ENCODE measurements at regions of chr3 and their contacts with region 1.

Region 1: GRCh38 chr3:183635431-183636220 is at the start of gene KLHL24:
- DNase-seq: peak; percentile 95 to 96
- ATAC-seq: peak; percentile 78 to 82
- H3K4me3 ChIP-seq: peak within 1 kb of the TSS; percentile 95 to 99 (median 98)
- H3K27ac ChIP-seq: peak within 1 kb of the TSS; percentile 99 to 100 (median 100)
- H3K4me1 ChIP-seq: peaks cover 31 to 34% of the 10 kb centered on the region in 2 donors
- H3K27me3 ChIP-seq: no peaks in the 10 kb centered on the region
- CTCF ChIP-seq: no peak
- POLR2A ChIP-seq: peak; percentile 100
- total RNA-seq, gene KLHL24: 118 to 301 (median 222) TPM

Region 2: DNA sequence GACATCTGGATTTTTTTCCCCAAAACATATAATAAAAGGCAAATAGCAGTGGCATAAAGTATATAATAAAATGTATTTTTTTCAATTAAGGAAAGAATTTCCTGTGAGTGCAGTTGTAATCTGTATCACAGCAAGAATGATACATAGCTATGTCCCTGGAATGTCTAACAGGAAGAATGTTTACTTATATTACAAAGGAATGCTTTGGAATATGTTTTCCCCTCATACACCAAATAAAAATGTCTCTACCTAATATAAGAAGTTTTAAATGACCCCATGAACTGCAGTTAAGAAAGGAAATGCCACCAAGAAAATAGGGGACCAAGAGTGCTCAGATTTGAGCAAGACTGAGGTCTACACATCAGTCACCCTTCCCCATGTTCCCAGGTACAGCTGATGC is 880.3 kb before region 1 on chr3:
- in situ Hi-C with region 1: no loop called
- intact Hi-C with region 1: no loop called
- DNase-seq: no peak
- ATAC-seq: no peak
- H3K4me3 ChIP-seq: no peak overlapping the region
- H3K27ac ChIP-seq: no peak overlapping the region
- H3K4me1 ChIP-seq: no peaks in the 10 kb centered on the region
- H3K27me3 ChIP-seq: no peaks in the 10 kb centered on the region
- CTCF ChIP-seq: no peak
- POLR2A ChIP-seq: no peak

Region 3: GRCh38 chr3:182792901-182793662 is 842.5 kb before region 1 on chr3 and contains the start of gene ATP11B:
- in situ Hi-C with region 1: no loop called
- intact Hi-C with region 1: loop called (anchors 10 kb)
- DNase-seq: peak; percentile 47 to 59
- ATAC-seq: peak; percentile 77 to 81
- H3K4me3 ChIP-seq: peak within 1 kb of the TSS; percentile 78 to 94 (median 86)
- H3K27ac ChIP-seq: peak within 1 kb of the TSS; percentile 88 to 95 (median 94)
- H3K4me1 ChIP-seq: peaks cover 20 to 26% of the 10 kb centered on the region in 2 donors
- H3K27me3 ChIP-seq: no peaks in the 10 kb centered on the region
- CTCF ChIP-seq: no peak
- POLR2A ChIP-seq: peak; percentile 74 to 88
- total RNA-seq, gene ATP11B: 16.3 to 44.6 (median 23.4) TPM

Region 4: GRCh38 chr3:183038221-183038620 is 597.4 kb before region 1 on chr3:
- in situ Hi-C with region 1: no loop called
- intact Hi-C with region 1: no loop called
- DNase-seq: no peak
- ATAC-seq: no peak
- H3K4me3 ChIP-seq: no peak overlapping the region
- H3K27ac ChIP-seq: no peak overlapping the region
- H3K4me1 ChIP-seq: no peaks in the 10 kb centered on the region
- H3K27me3 ChIP-seq: no peaks in the 10 kb centered on the region
- CTCF ChIP-seq: no peak
- POLR2A ChIP-seq: no peak

Region 5: GRCh38 chr3:183489455-183490210 is 146.0 kb before region 1 on chr3:
- in situ Hi-C with region 1: no loop called
- intact Hi-C with region 1: loop called (anchors 5 kb)
- DNase-seq: no peak
- ATAC-seq: peak; percentile 92 to 93
- H3K4me3 ChIP-seq: peak overlapping the region in 1 of 4 donors; percentile 6
- H3K27ac ChIP-seq: peak overlapping the region; percentile 76 to 90 (median 84)
- H3K4me1 ChIP-seq: peaks cover 28 to 42% of the 10 kb centered on the region in 2 donors
- H3K27me3 ChIP-seq: no peaks in the 10 kb centered on the region
- CTCF ChIP-seq: no peak
- POLR2A ChIP-seq: peak in 1 of 2 donors; percentile 45

Region 6: GRCh38 chr3:183619624-183620251 is 15.9 kb before region 1 on chr3:
- in situ Hi-C with region 1: no loop called
- intact Hi-C with region 1: no loop called
- DNase-seq: peak; percentile 24 to 46
- ATAC-seq: peak; percentile 79 to 81
- H3K4me3 ChIP-seq: no peak overlapping the region
- H3K27ac ChIP-seq: peak overlapping the region; percentile 33 to 62 (median 46)
- H3K4me1 ChIP-seq: peaks cover 12 to 17% of the 10 kb centered on the region in 2 donors
- H3K27me3 ChIP-seq: no peaks in the 10 kb centered on the region
- CTCF ChIP-seq: no peak
- POLR2A ChIP-seq: no peak

Region 7: GRCh38 chr3:184154885-184155643 is 519.4 kb after region 1 on chr3 and contains the start of gene DVL3:
- in situ Hi-C with region 1: no loop called
- intact Hi-C with region 1: loop called (anchors 5 kb)
- DNase-seq: peak; percentile 51 to 71
- ATAC-seq: peak; percentile 84 to 90
- H3K4me3 ChIP-seq: peak within 1 kb of the TSS; percentile 83 to 99 (median 94)
- H3K27ac ChIP-seq: peak within 1 kb of the TSS; percentile 89 to 97 (median 94)
- H3K4me1 ChIP-seq: peaks cover 42 to 53% of the 10 kb centered on the region in 2 donors
- H3K27me3 ChIP-seq: no peaks in the 10 kb centered on the region
- CTCF ChIP-seq: no peak
- POLR2A ChIP-seq: peak; percentile 52 to 78
- total RNA-seq, gene DVL3: 36.5 to 58.1 (median 48.0) TPM

Region 8: GRCh38 chr3:184811999-184812661 is 1176.5 kb after region 1 on chr3 and contains the start of gene VPS8:
- in situ Hi-C with region 1: no loop called
- intact Hi-C with region 1: loop called (anchors 10 kb)
- DNase-seq: peak; percentile 92 to 96
- ATAC-seq: peak; percentile 81 to 83
- H3K4me3 ChIP-seq: peak within 1 kb of the TSS; percentile 70 to 87 (median 82)
- H3K27ac ChIP-seq: peak within 1 kb of the TSS; percentile 89 to 94 (median 90)
- H3K4me1 ChIP-seq: peaks cover 45 to 51% of the 10 kb centered on the region in 2 donors
- H3K27me3 ChIP-seq: no peaks in the 10 kb centered on the region
- CTCF ChIP-seq: peak in 4 of 5 experiments; percentile 77 to 89 (median 81)
- POLR2A ChIP-seq: peak; percentile 98
- total RNA-seq, gene VPS8: 37.2 to 64.1 (median 51.2) TPM